Endothelial cell of umbilical vein (primary cell): ENCODE measurements at regions of chr3 and their contacts with region 1.

Region 1: GRCh38 chr3:128133273-128134084 is 9.9 kb upstream of the RUVBL1 start:
- DNase-seq: peak; percentile 76
- H3K4me3 ChIP-seq: no peak overlapping the region
- H3K27ac ChIP-seq: no peak overlapping the region
- H3K4me1 ChIP-seq: no peaks in the 10 kb centered on the region
- H3K27me3 ChIP-seq: peaks cover 16 to 19% of the 10 kb centered on the region in 2 experiments
- CTCF ChIP-seq: peak; percentile 67 to 78
- POLR2A ChIP-seq: no peak

Region 2: GRCh38 chr3:127652231-127652995 is 481.1 kb before region 1 on chr3:
- CTCF ChIA-PET with region 1: interaction called, 6 read pairs
- POLR2A ChIA-PET with region 1: no interaction called
- dilution Hi-C with region 1: no loop called
- intact Hi-C with region 1: loop called (anchors 5 kb)
- DNase-seq: peak; percentile 57
- H3K4me3 ChIP-seq: no peak overlapping the region
- H3K27ac ChIP-seq: no peak overlapping the region
- H3K4me1 ChIP-seq: no peaks in the 10 kb centered on the region
- H3K27me3 ChIP-seq: peaks cover 0 to 4% of the 10 kb centered on the region in 2 experiments
- CTCF ChIP-seq: peak; percentile 84 to 88
- POLR2A ChIP-seq: no peak

Region 3: DNA sequence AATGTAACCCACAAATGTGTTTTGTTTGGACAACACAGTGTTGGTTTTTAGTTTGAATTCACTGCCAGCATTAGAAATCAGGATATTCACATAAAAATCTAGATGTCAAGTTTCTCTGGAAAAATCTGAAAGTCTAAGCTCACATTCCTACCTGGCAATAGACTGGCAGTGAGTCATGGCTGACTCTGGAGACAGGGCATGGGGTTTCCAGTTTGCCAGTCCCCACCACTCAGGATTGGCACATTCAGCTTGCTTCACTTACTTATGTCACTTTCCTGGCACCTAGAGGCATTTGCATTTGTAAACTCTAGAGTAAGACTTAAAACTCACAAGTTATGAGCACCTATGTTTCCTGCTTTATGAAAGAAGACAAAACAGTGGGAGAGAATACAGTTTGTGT is 100.4 kb before region 1 on chr3:
- CTCF ChIA-PET with region 1: no interaction called
- POLR2A ChIA-PET with region 1: no interaction called
- dilution Hi-C with region 1: no loop called
- intact Hi-C with region 1: no loop called
- DNase-seq: no peak
- H3K4me3 ChIP-seq: no peak overlapping the region
- H3K27ac ChIP-seq: no peak overlapping the region
- H3K4me1 ChIP-seq: no peaks in the 10 kb centered on the region
- H3K27me3 ChIP-seq: peaks cover 11 to 14% of the 10 kb centered on the region in 2 experiments
- CTCF ChIP-seq: no peak
- POLR2A ChIP-seq: no peak

Region 4: DNA sequence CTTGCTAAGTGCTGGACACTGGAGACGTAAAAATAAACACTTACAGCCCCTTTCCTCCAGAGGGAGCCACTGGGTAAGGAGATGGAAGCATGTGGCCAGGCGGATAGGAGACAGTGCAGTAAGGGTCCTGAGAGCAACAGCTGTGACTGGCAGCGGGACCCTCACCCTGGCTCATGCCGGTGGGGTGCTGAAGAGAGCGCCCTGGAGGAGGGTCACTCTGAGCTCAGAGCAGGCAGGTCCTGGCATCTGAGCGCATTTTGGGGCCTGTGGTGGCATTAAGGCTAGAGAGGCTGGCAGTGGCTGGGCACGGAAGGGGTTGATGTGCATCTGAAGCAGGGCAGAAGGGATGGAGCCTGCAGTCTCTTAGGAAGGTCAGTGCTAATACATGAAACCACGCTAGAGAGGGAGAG is 65.3 kb before region 1 on chr3:
- CTCF ChIA-PET with region 1: interaction called, 44 read pairs
- POLR2A ChIA-PET with region 1: interaction called, 3 read pairs
- dilution Hi-C with region 1: no loop called
- intact Hi-C with region 1: no loop called
- DNase-seq: peak; percentile 54
- H3K4me3 ChIP-seq: no peak overlapping the region
- H3K27ac ChIP-seq: no peak overlapping the region
- H3K4me1 ChIP-seq: peaks cover 12% of the 10 kb centered on the region
- H3K27me3 ChIP-seq: no peaks in the 10 kb centered on the region
- CTCF ChIP-seq: peak; percentile 56 to 61
- POLR2A ChIP-seq: no peak

Region 5: DNA sequence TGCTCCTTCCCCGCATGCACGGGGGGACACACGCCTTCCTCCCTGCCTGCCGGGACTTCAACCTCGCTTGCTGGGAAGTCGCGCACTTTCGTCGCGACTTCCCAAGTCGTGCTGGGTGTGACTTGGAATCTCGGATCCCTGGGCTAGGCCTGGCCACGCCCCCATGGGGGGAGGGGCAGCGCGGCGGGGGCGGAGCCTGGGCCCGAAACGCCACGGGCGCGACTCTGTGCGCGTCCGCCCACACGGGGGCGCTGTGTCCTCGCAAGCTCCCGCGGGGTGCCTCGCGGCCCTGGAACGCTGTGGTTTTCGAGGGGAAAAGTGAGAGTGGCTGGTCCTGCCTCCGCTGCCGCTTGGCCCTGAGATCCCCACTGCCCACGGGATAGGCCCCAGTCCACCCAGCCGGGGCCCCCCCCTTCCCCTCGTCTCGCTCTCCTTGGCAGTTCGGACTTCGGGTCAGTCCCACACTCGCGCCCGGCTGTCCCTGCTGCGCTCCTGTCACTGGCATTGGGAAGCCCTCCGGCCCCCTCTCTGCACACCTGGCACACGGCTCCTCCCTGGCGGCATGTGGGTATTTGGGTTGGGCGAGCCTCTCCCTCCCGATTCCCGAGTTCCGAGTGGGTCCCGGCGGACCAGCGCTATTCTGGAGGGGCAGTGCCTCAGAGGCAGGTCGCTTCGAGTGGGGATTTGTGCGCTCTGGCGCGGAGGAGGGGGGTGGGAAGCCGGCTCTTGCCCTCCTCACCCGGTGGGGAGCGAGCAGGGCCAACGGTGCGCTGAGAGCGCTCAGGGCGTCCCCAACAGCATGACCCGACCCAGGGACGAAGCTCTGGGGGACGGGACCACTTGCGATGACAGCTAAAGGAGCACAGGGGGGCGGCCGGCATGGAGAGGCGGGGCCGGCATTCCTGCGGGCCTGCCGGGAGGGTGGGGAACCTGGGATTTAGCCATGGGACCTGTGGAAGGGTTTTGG is 57.7 kb before region 1 on chr3:
- CTCF ChIA-PET with region 1: interaction called, 44 read pairs
- POLR2A ChIA-PET with region 1: no interaction called
- dilution Hi-C with region 1: no loop called
- intact Hi-C with region 1: loop called (anchors 1 kb)
- DNase-seq: peak; percentile 94
- H3K4me3 ChIP-seq: peak overlapping the region in 2 of 3 experiments; percentile 16 to 44
- H3K27ac ChIP-seq: peak overlapping the region; percentile 33
- H3K4me1 ChIP-seq: peaks cover 51% of the 10 kb centered on the region
- H3K27me3 ChIP-seq: no peaks in the 10 kb centered on the region
- CTCF ChIP-seq: peak; percentile 95 to 98
- POLR2A ChIP-seq: peak; percentile 55

Region 6: DNA sequence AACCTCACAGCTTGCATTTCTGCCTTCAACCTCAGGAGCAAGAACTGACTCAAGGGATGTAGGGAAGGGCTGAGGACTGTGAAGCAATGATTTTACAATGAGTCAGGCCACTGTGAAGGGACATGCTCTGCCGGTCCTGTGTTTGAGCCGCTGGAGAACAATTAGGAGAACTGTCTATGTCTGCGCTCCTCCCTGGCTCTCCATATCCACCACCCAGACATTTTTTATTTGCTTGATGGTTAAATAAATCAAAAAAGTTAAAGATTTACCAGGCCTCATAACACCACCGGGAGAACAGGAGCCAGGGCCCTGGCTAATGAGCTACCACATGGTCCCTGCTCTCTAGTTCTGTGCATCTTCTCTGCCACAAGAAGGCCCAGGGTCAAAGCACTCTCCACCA is 51.6 kb before region 1 on chr3:
- CTCF ChIA-PET with region 1: interaction called, 32 read pairs
- POLR2A ChIA-PET with region 1: no interaction called
- dilution Hi-C with region 1: no loop called
- intact Hi-C with region 1: no loop called
- DNase-seq: no peak
- H3K4me3 ChIP-seq: no peak overlapping the region
- H3K27ac ChIP-seq: no peak overlapping the region
- H3K4me1 ChIP-seq: peaks cover 8% of the 10 kb centered on the region
- H3K27me3 ChIP-seq: no peaks in the 10 kb centered on the region
- CTCF ChIP-seq: no peak
- POLR2A ChIP-seq: no peak

Region 7: GRCh38 chr3:128089135-128089534 is 44.3 kb before region 1 on chr3:
- CTCF ChIA-PET with region 1: interaction called, 273 read pairs
- POLR2A ChIA-PET with region 1: no interaction called
- dilution Hi-C with region 1: no loop called
- intact Hi-C with region 1: no loop called
- DNase-seq: no peak
- H3K4me3 ChIP-seq: no peak overlapping the region
- H3K27ac ChIP-seq: no peak overlapping the region
- H3K4me1 ChIP-seq: peaks cover 1% of the 10 kb centered on the region
- H3K27me3 ChIP-seq: no peaks in the 10 kb centered on the region
- CTCF ChIP-seq: no peak
- POLR2A ChIP-seq: no peak

Region 8: DNA sequence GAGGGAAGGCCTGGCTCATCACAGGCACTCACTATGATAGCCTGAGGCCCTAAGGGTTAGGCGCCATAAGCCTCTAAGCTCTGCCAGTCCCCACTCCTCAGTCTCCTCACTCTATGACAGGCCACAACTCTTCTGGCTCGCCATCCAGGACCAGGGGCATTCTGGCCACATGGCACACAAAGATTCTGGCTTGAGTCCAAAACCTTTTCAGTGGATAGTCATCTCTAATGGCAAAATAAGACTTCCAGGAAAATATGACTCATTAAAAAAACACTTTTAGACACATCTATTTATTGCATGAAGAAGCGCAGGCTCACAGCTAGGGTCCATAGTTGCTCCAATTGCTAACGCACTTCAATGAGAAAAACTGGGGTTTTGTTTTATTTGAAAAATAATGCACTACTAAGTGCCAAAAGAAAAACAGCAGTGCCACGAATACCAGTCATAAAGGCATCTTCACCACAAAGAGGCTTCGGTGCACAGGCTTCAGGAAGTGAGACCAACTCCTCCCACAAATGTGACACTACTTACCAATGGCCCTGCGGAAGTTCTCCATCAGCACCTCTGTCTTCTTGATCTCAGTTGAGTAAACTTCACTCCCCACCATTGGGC is 21.0 kb before region 1 on chr3:
- CTCF ChIA-PET with region 1: interaction called, 20 read pairs
- POLR2A ChIA-PET with region 1: no interaction called
- dilution Hi-C with region 1: no loop called
- intact Hi-C with region 1: no loop called
- DNase-seq: peak; percentile 89
- H3K4me3 ChIP-seq: no peak overlapping the region
- H3K27ac ChIP-seq: peak overlapping the region; percentile 36
- H3K4me1 ChIP-seq: peaks cover 14% of the 10 kb centered on the region
- H3K27me3 ChIP-seq: no peaks in the 10 kb centered on the region
- CTCF ChIP-seq: no peak
- POLR2A ChIP-seq: no peak